ENCODE measurements at regions of chr12 and their contacts with region 1.

Region 1: DNA sequence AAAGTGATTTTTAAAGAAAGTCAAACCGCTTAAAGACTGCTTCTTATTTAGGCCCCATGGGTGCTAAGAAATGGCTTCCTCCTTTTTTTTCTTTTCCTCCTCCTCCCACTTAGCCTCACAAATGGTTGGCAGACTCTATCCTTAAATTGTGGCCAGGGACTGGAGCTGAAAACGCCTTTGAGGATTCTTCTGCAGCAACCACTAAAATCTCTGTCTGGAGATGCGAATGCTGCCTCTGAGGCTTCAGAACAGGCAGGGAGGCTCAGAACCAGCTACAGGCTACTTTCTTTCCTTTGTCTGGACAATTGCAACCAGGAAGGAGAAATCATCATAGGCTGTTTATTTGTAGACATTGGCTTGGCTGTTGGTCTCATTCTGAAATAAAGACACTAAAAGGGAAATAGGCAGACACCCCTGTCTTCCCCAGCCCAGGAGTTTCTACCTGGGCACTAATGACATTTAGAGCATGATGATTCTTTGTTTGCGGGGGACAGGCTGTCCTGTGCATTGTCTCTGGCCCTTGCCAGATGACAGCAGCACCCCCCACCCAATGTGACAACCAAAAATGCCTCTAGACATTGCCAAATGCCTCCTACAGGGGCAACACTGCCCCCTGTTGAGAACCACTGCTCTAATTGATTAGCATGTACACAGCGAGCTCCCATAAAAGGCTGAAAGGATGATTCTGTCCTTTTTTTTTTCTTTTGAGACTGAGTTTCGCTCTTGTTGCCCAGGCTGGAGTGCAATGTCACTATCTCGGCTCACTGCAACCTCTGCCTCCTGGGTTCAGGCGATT is 50.3 kb downstream of the MAP1LC3B2 start:
- DNase-seq: no peak
- H3K4me3 ChIP-seq: no peak overlapping the region
- H3K27ac ChIP-seq: peak overlapping the region; percentile 73 to 76
- H3K4me1 ChIP-seq: no peaks in the 10 kb centered on the region
- H3K27me3 ChIP-seq: no peaks in the 10 kb centered on the region
- CTCF ChIP-seq: peak in 1 of 3 donors; percentile 9
- POLR2A ChIP-seq: no peak

Region 2: GRCh38 chr12:115419145-115419646 is 1190.3 kb before region 1 on chr12:
- intact Hi-C with region 1: loop called (anchors 5 kb)
- DNase-seq: no peak
- H3K4me3 ChIP-seq: no peak overlapping the region
- H3K27ac ChIP-seq: no peak overlapping the region
- H3K4me1 ChIP-seq: no peaks in the 10 kb centered on the region
- H3K27me3 ChIP-seq: no peaks in the 10 kb centered on the region
- CTCF ChIP-seq: no peak
- POLR2A ChIP-seq: no peak

Region 3: DNA sequence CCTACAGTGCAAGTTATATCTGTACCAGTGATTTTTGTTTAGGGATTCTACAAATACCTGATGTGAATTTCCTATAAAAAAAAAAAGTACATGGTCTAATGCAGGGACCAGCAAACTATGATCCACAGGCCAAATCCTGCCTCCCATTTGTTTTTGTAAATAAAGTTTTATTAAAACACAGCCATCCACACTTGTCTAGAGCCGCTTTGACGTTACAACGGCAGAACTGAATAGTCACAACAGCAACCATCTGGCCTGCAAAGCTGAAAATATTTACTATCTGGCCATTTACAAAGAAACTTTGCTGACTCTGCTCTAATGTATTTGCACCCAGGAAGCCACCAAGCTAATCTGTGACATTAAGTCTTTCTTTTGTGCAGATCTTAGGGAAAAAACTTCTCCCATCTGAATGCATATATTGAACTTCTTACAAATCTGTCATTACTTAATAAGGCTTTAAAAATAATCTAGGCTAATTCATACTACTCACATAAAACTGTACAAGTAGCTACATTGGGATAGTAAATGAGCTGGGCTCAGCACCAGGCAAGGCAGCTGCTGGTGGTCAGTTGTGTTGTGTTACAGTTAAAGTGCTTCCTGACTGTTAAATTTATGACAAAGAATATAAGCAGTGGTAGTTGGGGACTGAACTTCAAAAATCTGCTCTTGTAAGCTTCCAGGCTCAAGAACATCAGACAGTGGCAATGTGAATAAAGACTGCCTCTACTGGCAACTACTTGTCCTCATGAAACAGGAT is 635.4 kb before region 1 on chr12:
- intact Hi-C with region 1: no loop called
- DNase-seq: no peak
- H3K4me3 ChIP-seq: no peak overlapping the region
- H3K27ac ChIP-seq: no peak overlapping the region
- H3K4me1 ChIP-seq: no peaks in the 10 kb centered on the region
- H3K27me3 ChIP-seq: no peaks in the 10 kb centered on the region
- CTCF ChIP-seq: no peak
- POLR2A ChIP-seq: no peak

Region 4: GRCh38 chr12:116673681-116674111 is 64.2 kb after region 1 on chr12:
- intact Hi-C with region 1: no loop called
- DNase-seq: no peak
- H3K4me3 ChIP-seq: no peak overlapping the region
- H3K27ac ChIP-seq: no peak overlapping the region
- H3K4me1 ChIP-seq: no peaks in the 10 kb centered on the region
- H3K27me3 ChIP-seq: no peaks in the 10 kb centered on the region
- CTCF ChIP-seq: no peak
- POLR2A ChIP-seq: no peak

Measured in breast epithelium (tissue), 4 donors.